ENCODE measurements at regions of chr9 and their contacts with region 1.

Region 1: GRCh38 chr9:128504485-128505413 is at the start of gene GLE1:
- DNase-seq: peak; percentile 96 to 98
- ATAC-seq: peak; percentile 99 to 100 (median 99)
- H3K4me3 ChIP-seq: peak within 1 kb of the TSS; percentile 86
- H3K27ac ChIP-seq: peak within 1 kb of the TSS; percentile 89
- H3K4me1 ChIP-seq: peaks cover 17% of the 10 kb centered on the region
- H3K27me3 ChIP-seq: no peaks in the 10 kb centered on the region
- CTCF ChIP-seq: no peak
- total RNA-seq, gene GLE1: 16.1 to 25.7 (median 23.5) TPM

Region 2: GRCh38 chr9:128438343-128439109 is 66.2 kb before region 1 on chr9:
- intact Hi-C with region 1: loop called in 1 of 2 experiments (anchors 2 kb)
- DNase-seq: peak; percentile 88 to 93
- ATAC-seq: peak; percentile 91 to 97 (median 92)
- H3K4me3 ChIP-seq: no peak overlapping the region
- H3K27ac ChIP-seq: no peak overlapping the region
- H3K4me1 ChIP-seq: no peaks in the 10 kb centered on the region
- H3K27me3 ChIP-seq: no peaks in the 10 kb centered on the region
- CTCF ChIP-seq: peak; percentile 93

Region 3: GRCh38 chr9:128455849-128456612 is 48.7 kb before region 1 on chr9 and contains the start of gene ODF2:
- intact Hi-C with region 1: loop called in 1 of 2 experiments (anchors 1 kb)
- DNase-seq: peak; percentile 98 to 99
- ATAC-seq: peak; percentile 98 to 99 (median 98)
- H3K4me3 ChIP-seq: peak within 1 kb of the TSS; percentile 86
- H3K27ac ChIP-seq: peak within 1 kb of the TSS; percentile 77
- H3K4me1 ChIP-seq: no peaks in the 10 kb centered on the region
- H3K27me3 ChIP-seq: no peaks in the 10 kb centered on the region
- CTCF ChIP-seq: no peak
- total RNA-seq, gene ODF2: 6.7 to 12.3 (median 7.4) TPM

Region 4: DNA sequence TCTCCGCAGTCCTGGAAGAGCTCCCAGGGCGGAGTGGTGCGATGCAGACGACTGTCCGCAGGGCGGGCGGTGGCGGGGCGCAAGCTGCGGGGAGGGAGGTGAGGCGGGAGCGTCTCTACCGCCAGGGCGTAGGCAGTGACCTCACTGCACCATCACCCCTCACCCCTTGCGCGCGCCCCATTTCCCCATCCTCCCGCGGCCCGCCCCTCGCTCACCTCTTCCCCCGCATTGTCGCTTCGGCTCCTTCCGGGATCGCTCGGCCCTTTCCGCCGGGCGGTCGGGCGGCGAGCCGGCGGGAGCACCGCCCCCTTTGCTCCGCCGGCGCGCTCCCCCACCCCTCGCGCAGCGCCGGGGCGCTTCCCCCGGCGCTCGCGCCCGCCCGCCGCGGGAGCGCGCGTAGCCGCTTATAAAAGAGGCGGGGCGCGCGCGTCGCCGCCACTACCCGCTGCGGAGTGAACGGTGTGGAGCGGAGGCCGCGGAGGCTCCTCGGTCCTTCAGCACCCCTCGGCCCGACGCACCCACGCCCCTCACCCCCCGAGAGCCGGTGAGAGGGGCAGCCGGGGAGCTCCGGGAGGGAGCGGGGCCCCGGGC is 47.5 kb after region 1 on chr9 and contains the start of gene SPTAN1:
- intact Hi-C with region 1: loop called in 1 of 2 experiments (anchors 2 kb)
- DNase-seq: peak; percentile 92 to 95
- ATAC-seq: peak; percentile 93 to 95 (median 94)
- H3K4me3 ChIP-seq: peak within 1 kb of the TSS; percentile 96
- H3K27ac ChIP-seq: peak within 1 kb of the TSS; percentile 90
- H3K4me1 ChIP-seq: peaks cover 44% of the 10 kb centered on the region
- H3K27me3 ChIP-seq: no peaks in the 10 kb centered on the region
- CTCF ChIP-seq: peak; percentile 10
- total RNA-seq, gene SPTAN1: 42.6 to 91.4 (median 56.2) TPM

Region 5: DNA sequence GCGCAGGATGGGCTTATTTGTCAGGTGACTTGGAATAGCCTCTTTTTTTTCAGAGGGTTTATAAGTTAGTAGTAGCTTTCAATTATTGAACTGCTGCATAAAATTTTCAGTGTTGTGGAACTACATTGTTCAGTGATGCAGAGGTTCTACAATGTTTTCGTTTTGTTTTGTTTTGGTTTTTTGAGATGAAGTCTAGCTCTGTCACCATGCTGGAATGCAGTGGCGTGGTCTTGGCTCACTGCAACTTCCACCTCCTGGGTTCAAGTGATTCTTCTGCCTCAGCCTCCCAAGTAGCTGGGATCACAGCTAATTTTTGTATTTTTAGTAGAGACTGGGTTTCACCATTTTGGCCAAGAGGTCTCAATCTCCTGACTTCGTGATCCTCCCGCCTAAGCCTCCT is 464.7 kb after region 1 on chr9:
- intact Hi-C with region 1: no loop called
- DNase-seq: no peak
- ATAC-seq: no peak
- H3K4me3 ChIP-seq: no peak overlapping the region
- H3K27ac ChIP-seq: no peak overlapping the region
- H3K4me1 ChIP-seq: no peaks in the 10 kb centered on the region
- H3K27me3 ChIP-seq: no peaks in the 10 kb centered on the region
- CTCF ChIP-seq: no peak

Measured in psoas muscle (tissue), 8 donors.